PC-9 (cell line): ENCODE measurements at regions of chr19 and their contacts with region 1.

Region 1: DNA sequence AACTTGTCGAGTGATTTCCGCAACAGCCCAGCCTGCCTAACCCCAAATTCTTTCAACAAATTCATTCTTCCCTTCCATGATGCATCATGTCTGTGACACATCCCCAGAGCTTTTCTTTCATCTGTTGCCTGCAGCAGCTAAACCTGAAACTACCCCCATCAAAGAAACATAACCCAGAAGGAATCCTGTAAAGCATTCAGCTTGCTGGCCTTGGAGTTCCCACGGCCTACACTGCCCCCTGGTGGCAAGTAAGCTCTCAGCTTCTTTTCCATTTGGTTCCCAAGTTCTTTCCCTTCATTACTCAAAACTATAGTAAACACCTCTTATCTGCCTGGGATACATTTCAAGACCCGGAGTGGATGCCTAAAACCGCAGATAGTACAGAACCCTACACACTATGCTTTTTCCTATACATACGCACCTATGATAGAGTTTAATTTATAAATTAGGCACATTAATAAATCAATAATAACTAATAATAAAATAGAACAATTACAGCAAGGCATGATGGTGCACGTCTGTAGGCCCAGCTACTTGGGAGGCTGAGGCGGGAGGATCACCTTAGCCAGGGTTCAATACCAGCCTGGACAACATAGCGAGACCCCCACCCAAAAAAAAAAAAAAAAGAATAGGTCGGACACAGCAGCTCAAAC is 7.4 kb downstream of the ETHE1 start:
- DNase-seq: peak; percentile 86 to 97
- H3K4me3 ChIP-seq: no peak overlapping the region
- H3K27ac ChIP-seq: peak overlapping the region; percentile 95
- H3K4me1 ChIP-seq: peaks cover 40% of the 10 kb centered on the region
- H3K27me3 ChIP-seq: no peaks in the 10 kb centered on the region
- CTCF ChIP-seq: peak; percentile 94

Region 2: DNA sequence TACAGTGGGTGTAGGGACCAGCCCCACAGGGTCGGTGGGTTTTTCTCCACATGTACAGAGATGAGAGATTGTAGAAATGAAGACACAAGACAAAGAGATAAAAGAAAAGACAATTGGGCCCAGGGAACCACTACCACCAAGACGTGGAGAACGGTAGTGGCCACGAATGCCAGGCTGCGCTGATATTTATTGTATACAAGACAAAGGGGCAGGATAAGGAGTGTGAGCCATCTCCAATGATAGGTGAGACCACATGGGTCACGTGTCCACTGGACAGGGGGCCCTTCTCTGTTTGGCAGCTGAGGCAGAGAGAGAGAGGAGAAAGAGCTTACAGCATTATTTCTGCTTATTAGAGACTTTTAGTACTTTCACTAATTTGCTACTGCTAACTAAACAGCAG is 328.4 kb before region 1 on chr19:
- CTCF ChIA-PET with region 1: no interaction called
- POLR2A ChIA-PET with region 1: no interaction called
- intact Hi-C with region 1: loop called (anchors 2 kb)
- DNase-seq: no peak
- H3K4me3 ChIP-seq: no peak overlapping the region
- H3K27ac ChIP-seq: no peak overlapping the region
- H3K4me1 ChIP-seq: no peaks in the 10 kb centered on the region
- H3K27me3 ChIP-seq: no peaks in the 10 kb centered on the region
- CTCF ChIP-seq: no peak

Region 3: GRCh38 chr19:43408043-43408442 is 111.5 kb before region 1 on chr19:
- CTCF ChIA-PET with region 1: no interaction called
- POLR2A ChIA-PET with region 1: no interaction called
- intact Hi-C with region 1: no loop called
- DNase-seq: no peak
- H3K4me3 ChIP-seq: no peak overlapping the region
- H3K27ac ChIP-seq: no peak overlapping the region
- H3K4me1 ChIP-seq: peaks cover 12% of the 10 kb centered on the region; the same call in 1 of the 2 replicates
- H3K27me3 ChIP-seq: no peaks in the 10 kb centered on the region
- CTCF ChIP-seq: no peak

Region 4: GRCh38 chr19:43446746-43447489 is 72.6 kb before region 1 on chr19:
- CTCF ChIA-PET with region 1: interaction called, 40 read pairs
- POLR2A ChIA-PET with region 1: no interaction called
- intact Hi-C with region 1: loop called (anchors 1 kb)
- DNase-seq: peak; percentile 67 to 71
- H3K4me3 ChIP-seq: no peak overlapping the region
- H3K27ac ChIP-seq: no peak overlapping the region
- H3K4me1 ChIP-seq: peaks cover 6% of the 10 kb centered on the region; the same call in 1 of the 2 replicates
- H3K27me3 ChIP-seq: no peaks in the 10 kb centered on the region
- CTCF ChIP-seq: peak; percentile 94

Region 5: GRCh38 chr19:43503501-43504425 is 15.8 kb before region 1 on chr19:
- CTCF ChIA-PET with region 1: interaction called, 5 read pairs
- POLR2A ChIA-PET with region 1: interaction called, 10 read pairs
- intact Hi-C with region 1: no loop called
- DNase-seq: peak; percentile 83 to 94
- H3K4me3 ChIP-seq: peak overlapping the region; percentile 74
- H3K27ac ChIP-seq: peak overlapping the region; percentile 63
- H3K4me1 ChIP-seq: peaks cover 11% of the 10 kb centered on the region
- H3K27me3 ChIP-seq: no peaks in the 10 kb centered on the region
- CTCF ChIP-seq: no peak

Region 6: DNA sequence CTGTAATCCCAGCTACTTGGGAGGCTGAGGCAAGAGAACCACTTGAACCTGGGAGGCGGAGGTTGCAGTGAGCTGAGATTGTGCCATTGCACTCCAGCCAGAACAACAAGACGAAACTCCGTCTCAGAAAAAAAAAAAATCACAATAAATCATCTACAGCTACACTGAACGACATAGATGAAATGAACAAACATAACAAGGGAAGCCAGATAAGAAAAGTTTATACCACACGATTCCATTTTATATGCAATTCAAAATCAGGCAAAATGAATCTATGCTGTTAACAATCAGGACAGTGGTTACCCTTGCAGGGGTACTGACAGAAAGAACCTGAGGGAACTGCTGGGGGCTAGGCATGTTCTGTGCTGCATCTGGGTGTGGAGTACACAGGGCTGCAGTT is 50.1 kb after region 1 on chr19:
- CTCF ChIA-PET with region 1: no interaction called
- POLR2A ChIA-PET with region 1: no interaction called
- intact Hi-C with region 1: no loop called
- DNase-seq: no peak
- H3K4me3 ChIP-seq: no peak overlapping the region
- H3K27ac ChIP-seq: no peak overlapping the region
- H3K4me1 ChIP-seq: peaks cover 4% of the 10 kb centered on the region; the same call in 1 of the 2 replicates
- H3K27me3 ChIP-seq: no peaks in the 10 kb centered on the region
- CTCF ChIP-seq: no peak

Region 7: GRCh38 chr19:43624933-43625332 is 105.4 kb after region 1 on chr19:
- CTCF ChIA-PET with region 1: no interaction called
- POLR2A ChIA-PET with region 1: no interaction called
- intact Hi-C with region 1: no loop called
- DNase-seq: no peak
- H3K4me3 ChIP-seq: no peak overlapping the region
- H3K27ac ChIP-seq: no peak overlapping the region
- H3K4me1 ChIP-seq: peaks cover 9% of the 10 kb centered on the region
- H3K27me3 ChIP-seq: no peaks in the 10 kb centered on the region
- CTCF ChIP-seq: no peak